ENCODE measurements at regions of chr1 and their contacts with region 1.

Region 1: DNA sequence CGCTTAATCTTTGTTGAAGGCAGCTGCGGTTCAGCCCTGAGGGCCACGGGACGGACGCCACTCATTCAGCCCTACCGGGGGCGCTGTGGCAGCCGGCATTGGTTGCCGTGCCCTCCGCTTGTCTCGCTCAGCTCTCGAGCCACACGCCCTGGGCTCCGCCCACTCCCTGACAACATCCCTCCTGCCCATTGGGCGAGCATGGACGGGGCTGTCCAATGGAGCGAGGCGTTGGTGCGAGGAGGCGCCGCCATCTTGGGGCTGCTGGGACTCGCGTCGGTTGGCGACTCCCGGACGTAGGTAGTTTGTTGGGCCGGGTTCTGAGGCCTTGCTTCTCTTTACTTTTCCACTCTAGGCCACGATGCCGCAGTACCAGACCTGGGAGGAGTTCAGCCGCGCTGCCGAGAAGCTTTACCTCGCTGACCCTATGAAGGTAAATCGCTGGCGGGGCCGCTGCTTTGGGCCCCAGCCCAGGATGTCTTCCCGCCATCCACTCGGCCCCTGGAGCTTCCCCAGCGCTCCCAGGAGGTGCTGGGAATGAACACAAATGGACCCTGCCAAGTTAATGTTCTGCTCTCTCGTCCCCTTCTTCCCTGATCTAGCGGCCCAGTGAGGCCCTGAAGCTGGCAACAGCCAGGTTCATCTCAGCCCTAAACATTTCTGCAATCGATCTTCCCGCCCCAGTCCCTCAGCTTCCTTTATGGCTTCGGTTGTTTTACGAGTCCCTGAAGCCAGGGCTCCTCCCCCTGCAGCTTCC is at the start of gene SRP9:
- DNase-seq: peak in 1 of 2 donors; percentile 98
- H3K4me3 ChIP-seq: peak within 1 kb of the TSS; percentile 57 to 64
- H3K27ac ChIP-seq: peak within 1 kb of the TSS; percentile 87
- H3K4me1 ChIP-seq: peaks cover 56% of the 10 kb centered on the region
- H3K27me3 ChIP-seq: no peaks in the 10 kb centered on the region
- CTCF ChIP-seq: peak; percentile 64 to 91 (median 89)
- POLR2A ChIP-seq: peak in 1 of 2 donors; percentile 78
- total RNA-seq, gene SRP9: 120 TPM

Region 2: GRCh38 chr1:225809842-225810578 is 32.2 kb after region 1 on chr1 and contains the start of gene EPHX1:
- intact Hi-C with region 1: loop called (anchors 5 kb)
- DNase-seq: no peak
- H3K4me3 ChIP-seq: peak within 1 kb of the TSS; percentile 79 to 90
- H3K27ac ChIP-seq: peak within 1 kb of the TSS; percentile 96
- H3K4me1 ChIP-seq: peaks cover 45% of the 10 kb centered on the region
- H3K27me3 ChIP-seq: no peaks in the 10 kb centered on the region
- CTCF ChIP-seq: no peak
- POLR2A ChIP-seq: peak in 1 of 2 donors; percentile 93
- total RNA-seq, gene EPHX1: 142 TPM

Region 3: GRCh38 chr1:225845571-225846259 is 68.0 kb after region 1 on chr1:
- intact Hi-C with region 1: loop called (anchors 5 kb)
- DNase-seq: peak in 1 of 2 donors; percentile 90
- H3K4me3 ChIP-seq: no peak overlapping the region
- H3K27ac ChIP-seq: peak overlapping the region; percentile 60
- H3K4me1 ChIP-seq: peaks cover 24% of the 10 kb centered on the region
- H3K27me3 ChIP-seq: no peaks in the 10 kb centered on the region
- CTCF ChIP-seq: peak; percentile 45 to 76 (median 46)
- POLR2A ChIP-seq: no peak

Region 4: GRCh38 chr1:225881969-225882693 is 104.4 kb after region 1 on chr1 and contains the start of gene TMEM63A:
- intact Hi-C with region 1: loop called (anchors 10 kb)
- DNase-seq: no peak
- H3K4me3 ChIP-seq: peak within 1 kb of the TSS; percentile 94
- H3K27ac ChIP-seq: peak within 1 kb of the TSS; percentile 92
- H3K4me1 ChIP-seq: peaks cover 57% of the 10 kb centered on the region
- H3K27me3 ChIP-seq: no peaks in the 10 kb centered on the region
- CTCF ChIP-seq: peak in 2 of 3 experiments; percentile 29 to 42
- POLR2A ChIP-seq: peak in 1 of 2 donors; percentile 73
- total RNA-seq, gene TMEM63A: 38.1 TPM

Region 5: DNA sequence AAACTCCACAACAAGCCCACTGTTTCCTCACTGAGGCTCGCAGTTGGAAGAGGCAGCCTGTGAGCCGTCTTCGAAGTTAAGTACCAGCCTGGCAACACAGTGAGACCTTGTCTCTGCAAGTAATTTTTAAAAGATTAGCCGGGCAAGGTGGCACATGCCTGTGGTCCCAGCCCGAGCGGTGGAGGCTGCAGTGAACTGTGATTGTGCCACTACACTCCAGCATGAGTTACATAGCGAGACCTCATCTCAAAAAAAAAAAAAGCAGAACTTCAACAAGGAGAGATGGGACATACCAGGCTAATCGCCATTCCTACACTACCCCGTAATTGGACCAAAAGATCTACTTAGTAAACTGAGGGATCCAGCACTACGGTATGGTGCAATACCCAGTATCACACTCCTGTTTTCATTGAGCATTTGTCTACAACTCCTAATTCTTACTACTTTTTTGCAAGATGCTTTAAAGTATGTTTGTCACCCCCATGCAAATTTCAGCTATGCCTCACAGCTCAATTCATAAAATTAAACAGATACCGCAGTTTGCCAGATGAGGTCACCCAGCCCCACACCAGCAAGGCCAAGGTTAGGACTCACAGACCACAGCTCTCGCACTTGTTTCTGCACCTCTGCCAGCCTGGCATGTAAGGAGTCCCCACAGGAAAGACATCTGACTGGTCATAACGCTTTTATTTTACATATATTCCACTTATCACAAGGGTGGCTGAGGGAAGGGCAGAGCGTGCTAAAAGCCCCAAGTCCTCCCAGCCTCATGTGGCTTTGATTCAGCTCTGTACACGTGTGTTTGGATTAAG is 200.4 kb after region 1 on chr1:
- intact Hi-C with region 1: loop called (anchors 10 kb)
- DNase-seq: no peak
- H3K4me3 ChIP-seq: no peak overlapping the region
- H3K27ac ChIP-seq: no peak overlapping the region
- H3K4me1 ChIP-seq: no peaks in the 10 kb centered on the region
- H3K27me3 ChIP-seq: no peaks in the 10 kb centered on the region
- CTCF ChIP-seq: no peak
- POLR2A ChIP-seq: no peak

Region 6: GRCh38 chr1:226487921-226488546 is 710.3 kb after region 1 on chr1:
- intact Hi-C with region 1: no loop called
- DNase-seq: no peak
- H3K4me3 ChIP-seq: no peak overlapping the region
- H3K27ac ChIP-seq: no peak overlapping the region
- H3K4me1 ChIP-seq: no peaks in the 10 kb centered on the region
- H3K27me3 ChIP-seq: no peaks in the 10 kb centered on the region
- CTCF ChIP-seq: no peak
- POLR2A ChIP-seq: no peak

Measured in vagina (tissue), 2 donors.